ENCODE measurements at regions of chr10 and their contacts with region 1.

Region 1: DNA sequence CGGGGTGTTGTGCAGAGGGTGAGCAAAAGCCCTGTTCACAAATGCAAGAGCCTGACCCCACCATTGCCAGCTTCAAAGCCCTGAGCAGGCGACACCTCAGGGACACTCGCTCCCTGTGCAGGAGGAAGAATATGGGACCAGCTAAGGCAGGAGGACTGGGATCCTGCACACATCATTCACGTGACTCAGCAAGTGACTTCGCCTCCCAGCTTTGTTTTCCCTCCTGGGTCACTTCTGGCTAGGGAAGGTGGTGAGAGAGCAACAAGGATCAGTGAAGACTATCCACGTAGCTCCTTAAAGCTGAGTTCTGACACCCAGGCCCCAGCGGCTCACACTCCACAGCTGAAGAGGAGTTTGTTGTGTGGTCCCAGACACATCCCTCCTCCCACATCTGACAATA is 164.3 kb downstream of the FGFR2 start:
- DNase-seq: no peak
- ATAC-seq: no peak

Region 2: DNA sequence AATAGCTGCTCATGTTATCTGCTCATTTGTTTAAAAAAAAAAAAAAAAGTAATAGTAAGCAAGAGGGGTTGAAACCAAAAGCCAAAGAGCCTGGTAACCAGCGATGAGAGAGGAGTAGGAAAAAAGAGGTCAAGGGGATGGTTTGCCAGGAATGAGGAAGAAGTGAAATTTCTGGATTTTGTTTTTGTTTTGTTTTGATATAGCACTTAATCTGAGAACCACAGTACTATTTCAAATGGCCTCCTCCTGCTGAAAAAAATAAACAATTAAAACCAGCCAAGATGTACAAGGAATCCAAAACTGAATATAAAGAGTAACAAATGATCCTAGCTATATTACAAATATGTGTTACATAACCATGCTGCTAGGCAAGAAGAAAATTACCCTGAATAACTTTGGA is 48.8 kb before region 1 on chr10:
- intact Hi-C with region 1: loop called (anchors 1 kb)
- DNase-seq: no peak
- ATAC-seq: no peak